ENCODE measurements at regions of chr9 and their contacts with region 1.

Region 1: GRCh38 chr9:91334053-91334452 is 27.7 kb downstream of the AUH start:
- DNase-seq: no peak
- ATAC-seq: peak in 3 of 4 donors; percentile 38 to 67 (median 50)
- H3K4me3 ChIP-seq: no peak overlapping the region
- H3K27ac ChIP-seq: no peak overlapping the region
- H3K4me1 ChIP-seq: no peaks in the 10 kb centered on the region
- H3K27me3 ChIP-seq: no peaks in the 10 kb centered on the region
- CTCF ChIP-seq: no peak

Region 2: DNA sequence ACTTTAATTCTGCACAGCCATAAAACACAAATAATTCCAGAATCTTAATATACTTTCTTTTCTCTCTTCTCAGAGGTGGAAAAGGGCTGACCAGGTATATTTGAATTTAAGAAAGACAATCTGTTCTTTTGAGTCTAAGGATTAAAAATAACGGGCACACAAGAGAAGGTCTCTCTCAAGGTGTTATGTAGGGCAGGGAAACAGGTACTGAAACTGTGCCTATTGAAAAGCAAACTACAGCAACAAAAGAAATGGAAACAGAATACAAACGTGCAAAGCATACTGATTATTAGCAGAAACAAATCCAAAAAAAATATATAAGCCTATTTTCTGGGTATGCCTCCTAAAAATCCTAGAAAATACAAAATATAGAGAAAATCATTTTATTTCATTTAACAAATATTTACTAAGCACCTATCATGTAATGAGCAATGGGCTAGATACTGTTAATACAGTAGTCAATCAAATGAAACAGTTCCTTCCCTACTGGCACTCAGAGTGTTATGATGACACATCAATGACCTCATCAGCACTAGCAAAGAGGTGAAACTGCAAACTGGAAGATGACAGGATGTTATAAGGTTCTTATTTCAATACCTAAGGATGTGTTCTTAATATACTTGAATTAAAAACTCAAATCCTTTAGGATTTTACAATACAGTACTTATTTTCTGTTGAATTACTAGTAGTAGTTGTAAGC is 60.0 kb before region 1 on chr9:
- intact Hi-C with region 1: loop called in 1 of 2 experiments (anchors 10 kb)
- DNase-seq: no peak
- ATAC-seq: peak; percentile 69 to 88 (median 78)
- H3K4me3 ChIP-seq: no peak overlapping the region
- H3K27ac ChIP-seq: no peak overlapping the region
- H3K4me1 ChIP-seq: peaks cover 17% of the 10 kb centered on the region
- H3K27me3 ChIP-seq: no peaks in the 10 kb centered on the region
- CTCF ChIP-seq: no peak

Region 3: GRCh38 chr9:91395553-91396471 is 61.8 kb after region 1 on chr9:
- intact Hi-C with region 1: loop called in 1 of 2 experiments (anchors 2 kb)
- DNase-seq: no peak
- ATAC-seq: no peak
- H3K4me3 ChIP-seq: no peak overlapping the region
- H3K27ac ChIP-seq: no peak overlapping the region
- H3K4me1 ChIP-seq: no peaks in the 10 kb centered on the region
- H3K27me3 ChIP-seq: no peaks in the 10 kb centered on the region
- CTCF ChIP-seq: no peak

Measured in psoas muscle (tissue), 8 donors.